ENCODE measurements at regions of chr5 and their contacts with region 1.

Region 1: DNA sequence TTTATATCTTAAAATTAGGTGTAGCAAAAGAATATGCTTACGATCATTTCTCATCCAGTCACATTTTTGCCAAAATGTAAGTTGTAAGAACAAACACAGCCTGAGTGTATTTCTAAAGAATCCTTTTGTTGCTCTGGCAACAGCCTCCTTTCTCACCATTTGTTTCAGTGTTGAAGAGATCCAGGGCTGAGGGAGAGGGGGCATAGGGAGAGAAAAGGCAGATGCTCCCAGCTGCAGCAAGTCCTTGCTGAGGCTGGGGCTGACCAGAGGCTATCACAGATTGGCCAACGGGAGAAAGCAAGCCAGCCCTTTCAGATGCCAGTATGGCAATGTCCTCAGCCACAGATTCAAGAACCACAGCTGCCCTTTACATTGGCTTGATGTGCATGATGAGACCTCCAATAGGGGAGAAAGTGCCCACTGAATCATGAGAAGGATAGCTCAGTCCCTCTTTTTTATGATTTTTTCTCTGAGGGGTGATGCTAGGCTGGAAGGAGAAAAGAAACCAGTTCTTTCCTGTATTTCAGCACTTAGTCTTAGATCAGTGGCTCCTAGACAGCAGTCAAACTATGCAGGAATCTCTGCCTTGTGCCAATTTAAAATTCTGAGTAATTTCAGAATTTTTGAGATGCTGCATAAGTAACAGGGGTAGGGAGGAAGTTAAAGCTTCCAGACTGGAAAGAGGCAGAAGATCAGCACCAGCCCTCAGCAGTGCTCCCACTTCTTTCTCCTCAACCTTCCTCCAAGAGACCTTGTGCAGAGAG is 142.1 kb downstream of the LHFPL2 start:
- DNase-seq: no peak
- H3K4me3 ChIP-seq: no peak overlapping the region
- H3K27ac ChIP-seq: no peak overlapping the region
- H3K4me1 ChIP-seq: peaks cover 17% of the 10 kb centered on the region
- H3K27me3 ChIP-seq: no peaks in the 10 kb centered on the region
- CTCF ChIP-seq: no peak
- EP300 ChIP-seq: no peak
- POLR2A ChIP-seq: no peak

Region 2: DNA sequence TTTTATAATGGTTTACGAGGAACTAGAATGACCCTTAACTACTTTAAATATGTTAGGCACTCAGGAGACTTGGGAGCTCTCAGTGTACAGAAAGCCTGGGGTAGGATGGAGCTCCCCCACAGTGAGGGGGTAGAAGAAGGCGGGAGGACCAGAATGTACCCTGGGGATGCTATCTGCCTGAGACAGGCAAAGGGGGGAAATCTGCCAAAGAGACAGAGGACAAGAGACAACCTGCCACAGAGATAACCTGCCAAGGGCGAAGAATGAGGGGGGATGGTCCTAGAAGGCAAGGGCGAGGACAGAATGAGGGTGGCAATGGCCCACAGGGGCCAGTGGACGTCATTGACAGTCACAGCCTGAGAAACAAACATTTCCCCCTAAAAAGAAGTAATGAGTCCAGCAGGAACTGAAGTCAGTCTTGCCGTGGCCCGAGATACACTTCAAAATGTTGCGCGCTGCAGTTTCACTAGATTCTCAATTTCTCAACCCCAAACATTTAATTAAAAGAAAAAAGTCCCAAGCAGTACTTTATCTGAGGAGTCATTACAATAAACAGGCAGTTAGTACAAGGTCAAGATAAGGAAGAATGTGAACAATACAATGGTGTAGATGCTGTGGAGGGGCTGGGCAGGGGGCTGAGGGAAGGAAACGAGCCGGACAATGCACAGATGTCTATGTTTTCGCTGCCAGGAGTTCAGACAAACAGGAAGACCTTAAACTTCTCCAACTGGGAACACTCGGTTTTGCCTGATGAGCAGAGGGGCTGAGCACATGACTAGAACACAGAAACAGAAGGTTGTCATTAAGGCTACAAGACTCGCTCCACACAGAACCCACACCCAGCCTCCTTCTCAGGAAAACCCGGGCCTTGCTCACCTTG is 17.1 kb after region 1 on chr5:
- intact Hi-C with region 1: loop called in 1 of 4 experiments (anchors 2 kb)
- DNase-seq: no peak
- H3K4me3 ChIP-seq: no peak overlapping the region
- H3K27ac ChIP-seq: peak overlapping the region; percentile 1 to 11
- H3K4me1 ChIP-seq: peaks cover 22% of the 10 kb centered on the region
- H3K27me3 ChIP-seq: no peaks in the 10 kb centered on the region
- CTCF ChIP-seq: no peak
- EP300 ChIP-seq: no peak
- POLR2A ChIP-seq: no peak

Region 3: DNA sequence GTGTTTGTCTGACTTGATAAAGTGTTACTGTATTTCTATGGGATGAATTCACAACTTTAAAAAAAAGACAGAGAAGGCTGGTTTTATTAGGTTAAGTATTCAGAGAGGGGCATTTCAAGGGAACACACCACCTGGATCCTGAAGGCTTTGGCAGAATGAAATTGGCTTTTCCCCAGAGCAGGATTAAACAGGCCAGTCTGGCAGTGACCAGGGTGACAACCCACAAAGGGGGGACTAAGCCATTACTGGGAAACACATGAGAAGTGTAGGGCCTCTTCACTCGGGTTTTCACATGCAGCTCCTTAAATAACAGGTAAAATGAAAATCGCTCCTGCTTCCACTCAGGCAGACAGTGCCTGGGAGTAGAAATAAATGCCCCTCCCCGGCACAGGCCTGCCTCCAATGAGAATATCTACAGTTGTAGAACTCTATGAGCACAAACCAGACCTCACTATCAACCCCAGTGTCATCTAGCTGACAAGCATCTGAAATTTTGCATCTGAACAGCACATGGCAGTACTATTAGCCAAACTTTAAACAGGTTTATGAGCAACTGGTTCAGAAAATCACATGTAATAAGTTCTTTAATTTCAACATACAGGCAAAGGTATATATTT is 56.4 kb after region 1 on chr5:
- intact Hi-C with region 1: no loop called
- DNase-seq: no peak
- H3K4me3 ChIP-seq: no peak overlapping the region
- H3K27ac ChIP-seq: no peak overlapping the region
- H3K4me1 ChIP-seq: no peaks in the 10 kb centered on the region
- H3K27me3 ChIP-seq: no peaks in the 10 kb centered on the region
- CTCF ChIP-seq: no peak
- EP300 ChIP-seq: no peak
- POLR2A ChIP-seq: no peak

Measured in ovary (tissue), 10 donors.